Heart right ventricle (tissue), 16 donors: ENCODE measurements at regions of chr1 and their contacts with region 1.

Region 1: DNA sequence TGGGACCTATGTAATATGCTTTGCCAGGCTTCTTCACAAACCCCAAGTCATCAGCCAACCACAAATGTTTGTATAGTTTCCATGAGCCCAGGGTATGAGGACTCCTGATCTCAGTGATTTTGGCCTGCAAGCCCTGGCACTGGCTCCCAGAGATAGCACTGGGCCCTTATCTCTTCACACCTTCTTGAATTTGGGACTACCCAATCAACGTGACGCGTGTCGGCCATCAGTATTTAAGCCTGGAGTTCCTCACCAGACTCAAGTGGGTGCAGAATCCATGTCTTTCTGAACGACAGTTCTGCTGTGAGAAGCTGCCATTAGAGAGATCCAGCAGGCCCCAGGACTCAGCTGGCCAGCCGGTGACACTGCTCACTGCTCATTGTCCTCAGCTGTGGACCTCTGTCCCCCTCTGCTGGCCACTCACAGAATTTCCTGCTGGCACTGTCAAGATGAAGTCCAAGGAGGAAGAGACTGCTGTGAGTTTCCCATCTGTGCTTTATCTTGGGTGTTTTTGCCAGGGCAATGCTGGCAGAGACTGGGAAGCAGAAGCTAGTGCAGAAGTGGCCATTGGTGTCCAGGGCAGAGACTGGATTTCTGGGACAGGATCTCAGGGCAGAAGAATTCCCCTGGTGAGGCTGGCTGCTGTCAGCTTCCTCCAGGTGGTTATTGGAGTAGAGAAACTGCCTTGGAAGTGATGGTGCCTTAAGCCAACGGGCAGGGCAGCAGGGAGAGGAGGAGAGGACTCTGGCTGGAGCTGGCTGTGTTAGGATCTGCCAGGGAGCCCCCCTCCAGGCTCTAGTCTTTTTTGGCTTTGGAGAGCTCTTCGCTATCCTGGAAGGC is 28.4 kb downstream of the TMCC2 start:
- DNase-seq: peak; percentile 90 to 91
- ATAC-seq: peak; percentile 86 to 94 (median 92)
- H3K4me3 ChIP-seq: no peak overlapping the region
- H3K27ac ChIP-seq: peak overlapping the region in 4 of 10 donors; percentile 6 to 45 (median 15)
- H3K4me1 ChIP-seq: peaks cover 28 to 49% (median 40%) of the 10 kb centered on the region in 9 donors
- H3K27me3 ChIP-seq: no peaks in the 10 kb centered on the region
- CTCF ChIP-seq: peak; percentile 92 to 99 (median 95)

Region 2: GRCh38 chr1:204975570-204976235 is 280.5 kb before region 1 on chr1:
- intact Hi-C with region 1: loop called in 3 of 10 experiments (anchors 2 to 10 kb)
- DNase-seq: peak in 1 of 2 donors; percentile 44
- ATAC-seq: peak in 7 of 8 donors; percentile 66 to 80 (median 73)
- H3K4me3 ChIP-seq: no peak overlapping the region
- H3K27ac ChIP-seq: no peak overlapping the region
- H3K4me1 ChIP-seq: peaks cover 0 to 27% (median 0%) of the 10 kb centered on the region in 9 donors
- H3K27me3 ChIP-seq: peaks cover 0 to 5% (median 0%) of the 10 kb centered on the region in 7 donors
- CTCF ChIP-seq: peak; percentile 58 to 88 (median 81)

Region 3: GRCh38 chr1:205077158-205077933 is 178.8 kb before region 1 on chr1:
- intact Hi-C with region 1: loop called in 1 of 10 experiments (anchors 10 kb)
- DNase-seq: peak in 1 of 2 donors; percentile 28
- ATAC-seq: peak; percentile 52 to 93 (median 81)
- H3K4me3 ChIP-seq: no peak overlapping the region
- H3K27ac ChIP-seq: no peak overlapping the region
- H3K4me1 ChIP-seq: peaks cover 0 to 17% (median 6%) of the 10 kb centered on the region in 9 donors
- H3K27me3 ChIP-seq: no peaks in the 10 kb centered on the region
- CTCF ChIP-seq: no peak

Region 4: GRCh38 chr1:205141236-205142101 is 114.7 kb before region 1 on chr1:
- intact Hi-C with region 1: loop called (anchors 5 to 10 kb)
- DNase-seq: peak; percentile 31 to 76
- ATAC-seq: peak; percentile 68 to 90 (median 82)
- H3K4me3 ChIP-seq: peak overlapping the region in 3 of 10 donors; percentile 7 to 24 (median 12)
- H3K27ac ChIP-seq: peak overlapping the region in 1 of 10 donors; percentile 21
- H3K4me1 ChIP-seq: peaks cover 0 to 33% (median 17%) of the 10 kb centered on the region in 9 donors
- H3K27me3 ChIP-seq: no peaks in the 10 kb centered on the region
- CTCF ChIP-seq: peak; percentile 57 to 89 (median 83)

Region 5: DNA sequence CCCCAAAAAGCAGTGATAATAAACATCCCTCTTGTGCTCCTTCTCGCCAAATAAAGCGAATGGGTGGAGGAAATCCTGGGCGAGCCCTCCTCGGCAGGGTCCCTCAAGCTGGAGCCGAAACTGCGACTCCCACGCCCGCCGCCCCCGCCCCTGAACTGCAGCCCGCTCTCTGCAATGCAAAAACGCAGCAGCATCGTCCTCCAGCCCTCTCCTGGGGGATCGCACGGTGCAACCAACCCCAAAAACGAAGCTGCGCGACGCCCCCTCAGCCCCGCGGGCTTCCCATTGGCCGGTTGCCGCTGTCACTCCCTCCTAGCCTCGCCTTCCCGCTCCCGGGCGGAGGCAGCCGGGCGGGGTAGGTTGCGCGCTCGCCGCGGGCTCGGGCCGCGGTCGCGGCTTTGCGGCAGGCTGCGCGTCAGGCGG is 28.6 kb before region 1 on chr1 and contains the start of gene TMCC2:
- intact Hi-C with region 1: loop called in 1 of 10 experiments (anchors 2 kb)
- DNase-seq: peak; percentile 93 to 94
- ATAC-seq: peak; percentile 95 to 98 (median 97)
- H3K4me3 ChIP-seq: peak within 1 kb of the TSS; percentile 35 to 85 (median 62)
- H3K27ac ChIP-seq: peak within 1 kb of the TSS in 2 of 10 donors; percentile 10 to 19
- H3K4me1 ChIP-seq: peaks cover 0 to 30% (median 23%) of the 10 kb centered on the region in 9 donors
- H3K27me3 ChIP-seq: peaks cover 0 to 36% (median 0%) of the 10 kb centered on the region in 7 donors
- CTCF ChIP-seq: no peak
- total RNA-seq, gene TMCC2: 0.62 to 2.6 (median 1.8) TPM